Mammary epithelial cell (primary cell): ENCODE measurements at regions of chr5 and their contacts with region 1.

Region 1: GRCh38 chr5:73591102-73591695 is 25.7 kb downstream of the UTP15 start:
- DNase-seq: peak; percentile 69
- H3K4me3 ChIP-seq: no peak overlapping the region
- H3K27ac ChIP-seq: no peak overlapping the region
- H3K4me1 ChIP-seq: peaks cover 7% of the 10 kb centered on the region
- H3K27me3 ChIP-seq: no peaks in the 10 kb centered on the region
- CTCF ChIP-seq: peak; percentile 71 to 86

Region 2: DNA sequence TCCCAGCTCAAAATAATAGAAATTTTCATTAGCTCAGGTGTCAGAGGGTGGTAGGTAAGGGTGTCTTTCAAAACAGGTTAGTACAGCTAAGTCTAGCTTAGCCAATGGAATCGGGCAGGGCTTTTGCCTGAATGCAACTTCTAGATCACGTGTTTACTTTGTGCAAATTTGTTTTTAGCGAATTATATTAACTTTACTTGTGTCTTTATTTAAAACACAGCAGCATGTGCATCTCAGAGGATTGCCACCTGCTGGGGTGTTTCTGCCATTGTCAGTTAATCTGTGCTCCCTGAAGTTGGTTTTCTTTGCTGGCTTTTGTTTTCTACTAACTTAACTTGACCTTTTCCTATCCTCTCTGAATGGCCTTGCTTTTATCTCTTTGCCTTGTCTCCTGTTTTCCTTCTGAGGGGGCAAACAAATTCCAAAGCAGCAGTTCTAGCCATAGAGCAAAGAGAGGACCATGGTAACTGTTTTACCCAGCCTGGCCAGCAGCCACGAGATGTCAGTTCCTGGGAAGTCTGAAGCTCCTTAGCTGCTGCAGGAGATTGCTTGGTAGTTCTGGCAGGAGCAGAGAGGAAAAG is 102.4 kb after region 1 on chr5:
- CTCF ChIA-PET with region 1: interaction called, 5 read pairs
- dilution Hi-C with region 1: loop called (anchors 5 kb)
- in situ Hi-C with region 1: no loop called
- intact Hi-C with region 1: loop called (anchors 1 kb)
- DNase-seq: no peak
- H3K4me3 ChIP-seq: no peak overlapping the region
- H3K27ac ChIP-seq: no peak overlapping the region
- H3K4me1 ChIP-seq: peaks cover 32% of the 10 kb centered on the region
- H3K27me3 ChIP-seq: no peaks in the 10 kb centered on the region
- CTCF ChIP-seq: peak; percentile 58 to 61

Region 3: GRCh38 chr5:73792687-73793320 is 201.6 kb after region 1 on chr5:
- CTCF ChIA-PET with region 1: no interaction called
- dilution Hi-C with region 1: loop called (anchors 25 kb)
- in situ Hi-C with region 1: loop called (anchors 5 kb)
- intact Hi-C with region 1: loop called (anchors 1 kb)
- DNase-seq: peak; percentile 61
- H3K4me3 ChIP-seq: no peak overlapping the region
- H3K27ac ChIP-seq: no peak overlapping the region
- H3K4me1 ChIP-seq: peaks cover 35% of the 10 kb centered on the region
- H3K27me3 ChIP-seq: no peaks in the 10 kb centered on the region
- CTCF ChIP-seq: peak; percentile 97 to 99

Region 4: GRCh38 chr5:74103131-74104023 is 512.2 kb after region 1 on chr5:
- CTCF ChIA-PET with region 1: no interaction called
- dilution Hi-C with region 1: no loop called
- in situ Hi-C with region 1: no loop called
- intact Hi-C with region 1: loop called (anchors 5 kb)
- DNase-seq: no peak
- H3K4me3 ChIP-seq: no peak overlapping the region
- H3K27ac ChIP-seq: no peak overlapping the region
- H3K4me1 ChIP-seq: peaks cover 7% of the 10 kb centered on the region
- H3K27me3 ChIP-seq: no peaks in the 10 kb centered on the region
- CTCF ChIP-seq: no peak

Region 5: DNA sequence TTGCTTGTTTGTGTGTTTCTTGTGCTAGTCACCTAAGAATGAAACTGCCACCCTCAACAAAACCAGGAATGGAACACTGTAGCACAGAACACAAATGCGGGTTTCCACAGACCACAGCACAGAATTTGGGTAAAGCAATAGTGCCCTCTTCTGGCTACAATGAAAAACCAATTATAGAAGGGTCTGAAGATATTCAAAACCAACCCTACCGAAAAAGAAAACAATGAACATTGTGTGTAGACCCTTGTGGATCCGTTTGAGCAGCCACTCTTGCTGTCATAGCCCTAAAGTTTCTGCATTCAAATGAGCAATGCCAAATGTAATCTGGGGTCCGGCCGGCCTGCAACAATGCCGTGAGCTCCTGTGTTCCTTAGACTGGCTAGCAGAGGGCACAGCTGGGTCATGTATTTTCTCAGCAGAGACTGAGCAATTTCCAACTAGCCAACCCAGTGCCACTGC is 1057.7 kb after region 1 on chr5:
- CTCF ChIA-PET with region 1: no interaction called
- dilution Hi-C with region 1: no loop called
- in situ Hi-C with region 1: loop called in 1 of 2 experiments (anchors 25 kb)
- intact Hi-C with region 1: loop called (anchors 1 kb)
- DNase-seq: no peak
- H3K4me3 ChIP-seq: no peak overlapping the region
- H3K27ac ChIP-seq: no peak overlapping the region
- H3K4me1 ChIP-seq: peaks cover 55% of the 10 kb centered on the region
- H3K27me3 ChIP-seq: no peaks in the 10 kb centered on the region
- CTCF ChIP-seq: peak; percentile 65 to 66